Spleen (tissue), 13 donors: ENCODE measurements at regions of chr9 and their contacts with region 1.

Region 1: DNA sequence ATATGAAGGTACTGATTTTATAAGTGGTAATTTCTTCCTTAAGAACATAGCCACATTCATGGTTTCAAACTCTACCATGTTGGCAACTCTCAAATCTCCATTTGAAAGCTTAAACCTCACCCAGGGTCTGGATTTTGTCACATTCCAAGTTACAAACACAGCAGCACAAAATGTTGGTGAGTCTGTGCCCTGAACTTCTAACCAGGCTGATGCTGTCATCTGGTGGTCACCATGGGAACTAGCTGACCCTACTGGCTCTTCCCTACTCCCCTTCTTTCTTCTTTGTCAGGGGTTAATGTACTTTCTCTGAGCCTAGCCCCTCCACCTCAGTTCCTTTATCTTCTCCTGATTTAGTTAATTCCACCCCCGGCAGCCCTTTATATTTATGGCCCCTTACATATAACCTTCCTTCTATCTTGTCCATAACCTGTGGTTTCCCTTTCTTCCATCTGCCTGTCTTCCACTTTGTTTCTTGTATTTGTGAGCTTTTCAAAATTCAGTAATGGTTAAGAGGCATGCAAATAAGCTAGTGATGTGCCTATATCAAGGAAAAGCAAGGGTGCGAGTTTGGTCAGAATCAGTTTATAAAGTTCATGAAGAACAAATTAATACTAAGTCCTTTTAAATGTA is 35.9 kb downstream of the TGFBR1 start:
- DNase-seq: no peak
- H3K4me3 ChIP-seq: no peak overlapping the region
- H3K27ac ChIP-seq: no peak overlapping the region
- H3K4me1 ChIP-seq: peaks cover 19 to 54% (median 32%) of the 10 kb centered on the region in 6 donors
- H3K27me3 ChIP-seq: no peaks in the 10 kb centered on the region
- CTCF ChIP-seq: peak; percentile 54 to 88 (median 79)
- POLR2A ChIP-seq: no peak

Region 2: GRCh38 chr9:98536542-98537173 is 604.1 kb before region 1 on chr9:
- intact Hi-C with region 1: no loop called
- DNase-seq: no peak
- H3K4me3 ChIP-seq: no peak overlapping the region
- H3K27ac ChIP-seq: no peak overlapping the region
- H3K4me1 ChIP-seq: no peaks in the 10 kb centered on the region
- H3K27me3 ChIP-seq: peaks cover 0 to 17% (median 0%) of the 10 kb centered on the region in 7 donors
- CTCF ChIP-seq: peak in 3 of 11 experiments; percentile 17 to 32 (median 18)
- POLR2A ChIP-seq: no peak

Region 3: DNA sequence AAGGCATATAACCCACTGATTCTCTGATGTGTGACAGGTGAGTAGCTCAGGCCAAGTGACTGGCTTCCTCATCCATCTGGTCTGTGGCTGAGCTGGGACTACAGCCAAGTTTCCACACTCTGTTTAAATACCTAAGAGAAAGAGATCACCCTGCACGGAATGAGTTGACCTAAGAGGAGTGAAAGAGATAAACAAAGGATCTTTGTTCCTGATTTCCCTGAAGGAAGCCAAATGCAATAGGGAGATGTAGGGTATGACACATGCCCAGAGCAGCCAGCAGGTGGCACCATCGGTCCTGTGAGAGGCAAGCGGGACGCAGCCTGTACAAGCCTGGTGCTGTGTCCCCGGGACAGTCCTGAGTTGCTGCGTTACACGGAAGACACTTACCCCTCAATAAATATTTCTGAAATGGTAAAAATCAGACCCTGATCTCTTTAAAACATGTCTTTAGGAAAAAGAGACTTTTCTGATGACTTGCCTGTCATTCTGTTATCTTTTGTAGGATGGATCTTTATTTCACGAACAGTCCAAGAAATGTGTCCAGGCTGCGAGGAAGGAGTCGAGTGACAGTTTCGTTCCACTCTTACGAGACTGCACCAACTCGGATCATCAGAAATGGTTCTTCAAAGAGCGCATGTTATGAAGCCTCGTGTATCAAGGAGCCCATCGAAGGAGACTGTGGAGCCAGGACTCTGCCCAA is 292.2 kb before region 1 on chr9:
- intact Hi-C with region 1: loop called (anchors 10 kb)
- DNase-seq: peak; percentile 94
- H3K4me3 ChIP-seq: peak overlapping the region in 3 of 8 donors; percentile 2 to 25 (median 2)
- H3K27ac ChIP-seq: no peak overlapping the region
- H3K4me1 ChIP-seq: peaks cover 0 to 20% (median 2%) of the 10 kb centered on the region in 6 donors
- H3K27me3 ChIP-seq: peaks cover 0 to under 1% (median 0%) of the 10 kb centered on the region in 7 donors
- CTCF ChIP-seq: peak; percentile 56 to 94 (median 86)
- POLR2A ChIP-seq: no peak

Region 4: DNA sequence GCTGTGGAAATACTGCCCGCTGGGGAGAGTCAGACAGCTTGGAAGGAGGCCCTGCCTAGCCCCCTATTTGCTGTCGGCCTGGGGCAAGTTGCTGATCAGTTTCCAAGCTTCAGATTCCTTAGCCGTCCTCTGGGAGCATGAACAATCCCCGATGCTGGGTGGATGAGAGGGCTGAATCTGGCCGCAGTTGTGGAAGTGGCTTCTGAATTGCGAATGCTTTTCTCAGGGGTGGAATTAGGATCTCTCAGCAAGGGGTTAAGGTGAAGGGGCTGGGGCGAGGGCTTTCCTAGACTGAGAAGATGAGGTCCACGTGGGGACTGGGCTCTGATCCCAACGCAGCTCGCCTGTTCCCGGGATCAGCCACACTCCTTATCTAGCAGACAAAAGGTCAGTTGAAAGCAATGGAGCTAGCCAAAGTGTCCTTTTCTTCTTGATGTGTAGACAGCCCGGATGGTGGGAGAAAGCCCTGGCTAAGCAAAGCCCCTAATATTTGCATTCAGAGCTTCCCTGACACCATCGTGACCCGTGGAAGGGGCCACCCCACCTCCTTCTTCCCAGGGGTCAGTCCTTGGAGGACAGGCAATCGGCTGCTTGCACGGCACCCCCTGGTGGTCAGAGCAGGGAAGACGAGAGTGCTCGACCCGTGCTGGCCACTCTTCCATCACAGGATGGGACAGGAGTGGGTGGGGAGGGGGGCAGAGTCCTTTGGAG is 142.2 kb before region 1 on chr9:
- intact Hi-C with region 1: loop called (anchors 2 kb)
- DNase-seq: peak; percentile 90
- H3K4me3 ChIP-seq: no peak overlapping the region
- H3K27ac ChIP-seq: peak overlapping the region in 1 of 8 donors; percentile 23
- H3K4me1 ChIP-seq: peaks cover 0 to 41% (median 22%) of the 10 kb centered on the region in 6 donors
- H3K27me3 ChIP-seq: peaks cover 0 to 13% (median 0%) of the 10 kb centered on the region in 7 donors
- CTCF ChIP-seq: peak; percentile 60 to 87 (median 82)
- POLR2A ChIP-seq: no peak

Region 5: GRCh38 chr9:99274495-99274894 is 133.7 kb after region 1 on chr9:
- intact Hi-C with region 1: no loop called
- DNase-seq: no peak
- H3K4me3 ChIP-seq: no peak overlapping the region
- H3K27ac ChIP-seq: no peak overlapping the region
- H3K4me1 ChIP-seq: no peaks in the 10 kb centered on the region
- H3K27me3 ChIP-seq: no peaks in the 10 kb centered on the region
- CTCF ChIP-seq: no peak
- POLR2A ChIP-seq: no peak